Activated CD8-positive, alpha-beta memory T cell treated with anti-CD3 and anti-CD28 coated beads, Interleukin-2, amount 10 ng/mL, durations not matched to agents 7 days and 5 days (primary cell): ENCODE measurements at regions of chr15 and their contacts with region 1.

Region 1: DNA sequence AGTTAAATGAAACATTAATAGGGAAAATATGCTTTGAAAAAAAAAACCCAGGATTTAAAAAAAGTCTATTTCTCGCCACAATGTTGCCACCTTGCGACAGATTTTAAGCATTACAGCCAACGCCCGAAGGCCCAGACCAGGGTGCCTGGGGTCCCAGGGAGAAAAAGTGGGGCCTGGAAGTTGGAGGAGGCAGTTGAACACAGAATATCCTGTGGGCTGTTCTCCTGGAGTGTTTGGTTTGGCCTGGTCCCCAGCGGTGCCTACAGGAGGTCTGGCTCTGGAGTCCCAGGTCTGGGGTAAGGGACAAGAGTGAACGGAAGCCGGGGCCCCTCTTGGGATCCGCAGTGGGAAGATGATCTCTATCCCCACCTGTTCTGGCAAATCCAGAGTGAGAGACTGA is 3.4 kb downstream of the RNU6-1 start:
- DNase-seq: peak; percentile 70
- ATAC-seq: no peak
- H3K4me3 Mint-ChIP-seq: peak overlapping the region; percentile 55
- H3K27ac Mint-ChIP-seq: no peak overlapping the region
- H3K4me1 Mint-ChIP-seq: peaks cover 44% of the 10 kb centered on the region
- H3K27me3 Mint-ChIP-seq: peaks cover 67% of the 10 kb centered on the region

Region 2: DNA sequence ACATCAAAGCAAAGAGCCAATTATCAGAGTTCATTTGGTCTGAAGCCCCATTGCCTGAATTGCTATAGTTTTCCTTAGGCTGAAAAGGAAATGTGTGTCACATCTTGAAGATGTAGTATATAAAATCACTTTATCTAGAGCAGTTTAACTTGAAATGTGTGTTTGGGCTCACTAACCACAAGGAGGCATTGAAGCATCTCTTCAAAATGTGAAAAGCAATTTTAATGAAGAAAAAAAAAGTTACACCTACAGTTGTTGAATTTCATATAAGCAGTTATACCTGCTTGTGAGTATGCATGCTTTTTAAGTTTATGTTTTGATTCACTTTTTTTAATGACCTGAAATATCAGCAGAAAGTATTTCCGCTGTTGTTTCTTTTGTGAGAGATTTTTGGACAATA is 452.6 kb before region 1 on chr15:
- CTCF ChIA-PET with region 1: no interaction called
- DNase-seq: no peak
- ATAC-seq: no peak
- H3K4me3 Mint-ChIP-seq: no peak overlapping the region
- H3K27ac Mint-ChIP-seq: no peak overlapping the region
- H3K4me1 Mint-ChIP-seq: peaks cover 2% of the 10 kb centered on the region
- H3K27me3 Mint-ChIP-seq: peaks cover 40% of the 10 kb centered on the region

Region 3: GRCh38 chr15:67456677-67457529 is 379.6 kb before region 1 on chr15:
- CTCF ChIA-PET with region 1: interaction called, 71 read pairs
- DNase-seq: peak; percentile 88
- ATAC-seq: peak; percentile 82
- H3K4me3 Mint-ChIP-seq: no peak overlapping the region
- H3K27ac Mint-ChIP-seq: no peak overlapping the region
- H3K4me1 Mint-ChIP-seq: peaks cover 2% of the 10 kb centered on the region
- H3K27me3 Mint-ChIP-seq: peaks cover 3% of the 10 kb centered on the region

Region 4: GRCh38 chr15:67501177-67501835 is 335.2 kb before region 1 on chr15:
- CTCF ChIA-PET with region 1: interaction called, 16 read pairs
- DNase-seq: no peak
- ATAC-seq: no peak
- H3K4me3 Mint-ChIP-seq: no peak overlapping the region
- H3K27ac Mint-ChIP-seq: no peak overlapping the region
- H3K4me1 Mint-ChIP-seq: peaks cover 7% of the 10 kb centered on the region
- H3K27me3 Mint-ChIP-seq: no peaks in the 10 kb centered on the region

Region 5: GRCh38 chr15:67784090-67784781 is 52.2 kb before region 1 on chr15:
- CTCF ChIA-PET with region 1: interaction called, 10 read pairs
- DNase-seq: no peak
- ATAC-seq: no peak
- H3K4me3 Mint-ChIP-seq: no peak overlapping the region
- H3K27ac Mint-ChIP-seq: peak overlapping the region; percentile 48
- H3K4me1 Mint-ChIP-seq: peaks cover 22% of the 10 kb centered on the region
- H3K27me3 Mint-ChIP-seq: no peaks in the 10 kb centered on the region

Region 6: GRCh38 chr15:67824976-67825879 is 11.2 kb before region 1 on chr15 and contains the start of gene SKOR1:
- CTCF ChIA-PET with region 1: interaction called, 18 read pairs
- DNase-seq: no peak
- ATAC-seq: no peak
- H3K4me3 Mint-ChIP-seq: peak within 1 kb of the TSS; percentile 53
- H3K27ac Mint-ChIP-seq: peak within 1 kb of the TSS; percentile 50
- H3K4me1 Mint-ChIP-seq: peaks cover 29% of the 10 kb centered on the region
- H3K27me3 Mint-ChIP-seq: peaks cover 76% of the 10 kb centered on the region
- total RNA-seq, gene SKOR1: 0.19 to 0.23 TPM